HepG2 (cell line): ENCODE measurements at regions of chr10 and their contacts with region 1.

Region 1: DNA sequence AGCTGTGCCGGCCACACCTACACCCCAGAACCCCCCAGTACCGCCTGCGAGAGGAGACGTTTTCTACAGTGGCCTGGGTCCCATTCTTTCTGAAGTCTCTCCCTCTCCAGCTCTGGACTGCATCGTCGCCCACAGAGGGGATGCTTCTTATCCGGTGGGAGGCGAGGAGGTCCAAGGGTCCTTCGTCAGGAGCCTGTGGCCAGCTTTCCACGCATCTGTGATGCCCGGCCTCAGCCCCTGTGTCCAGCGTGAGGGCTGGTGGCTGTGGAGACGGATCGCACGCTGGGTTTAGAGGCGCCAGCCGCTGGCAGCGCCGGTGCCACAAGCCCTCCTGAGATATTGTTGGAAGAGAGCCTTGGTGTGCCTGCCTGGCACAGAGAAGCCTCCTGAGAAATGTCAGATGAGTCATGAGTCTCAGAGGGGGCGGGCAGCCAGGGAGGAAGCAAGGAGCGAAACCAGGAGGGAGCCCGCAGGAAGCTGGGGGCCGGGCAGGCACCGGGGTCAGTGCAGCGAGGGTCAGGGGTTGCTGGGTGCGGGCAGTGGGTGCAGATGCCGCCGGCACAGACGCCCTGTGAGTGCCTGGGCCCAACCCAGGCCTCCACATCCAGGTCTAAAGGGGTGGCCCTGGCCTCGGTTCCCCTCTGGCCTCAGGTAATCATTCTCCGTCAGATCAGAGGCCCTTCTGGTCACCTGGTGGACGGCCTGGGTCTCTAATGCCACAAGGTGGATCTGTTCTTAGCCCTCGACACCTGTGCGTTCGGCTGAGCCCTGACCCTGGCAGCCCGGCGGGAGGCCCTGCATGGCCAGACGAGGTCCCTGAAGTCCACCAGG is 86.0 kb upstream of the DIP2C start:
- DNase-seq: no peak
- ATAC-seq: peak; percentile 15; the same call in 2 of the 3 replicates
- H3K4me3 ChIP-seq: no peak overlapping the region
- H3K27ac ChIP-seq: no peak overlapping the region
- H3K4me1 ChIP-seq: no peaks in the 10 kb centered on the region
- H3K27me3 ChIP-seq: peaks cover 8 to 61% of the 10 kb centered on the region in 2 experiments; a peak in 4 of 5 replicates
- CTCF ChIP-seq: no peak
- EP300 ChIP-seq: no peak
- POLR2A ChIP-seq: no peak
- RAD21 ChIP-seq: no peak

Region 2: GRCh38 chr10:689433-690371 is 85.8 kb before region 1 on chr10 and contains the start of gene DIP2C:
- CTCF ChIA-PET with region 1: no interaction called
- POLR2A ChIA-PET with region 1: no interaction called
- in situ Hi-C with region 1: no loop called
- intact Hi-C with region 1: no loop called
- DNase-seq: peak; percentile 16
- ATAC-seq: peak; percentile 75
- H3K4me3 ChIP-seq: peak within 1 kb of the TSS; percentile 80 to 86 (median 86)
- H3K27ac ChIP-seq: peak within 1 kb of the TSS; percentile 58
- H3K4me1 ChIP-seq: peaks cover 29% of the 10 kb centered on the region
- H3K27me3 ChIP-seq: peaks cover 0 to 17% of the 10 kb centered on the region in 2 experiments; a peak in 3 of 5 replicates
- CTCF ChIP-seq: no peak
- EP300 ChIP-seq: no peak
- POLR2A ChIP-seq: no peak
- RAD21 ChIP-seq: no peak; the same call in 1 of the 2 replicates
- total RNA-seq, gene DIP2C: 2.2 and 2.7 TPM in 2 replicates

Region 3: GRCh38 chr10:712089-712488 is 63.4 kb before region 1 on chr10:
- CTCF ChIA-PET with region 1: no interaction called
- POLR2A ChIA-PET with region 1: no interaction called
- in situ Hi-C with region 1: loop called (anchors 5 kb)
- intact Hi-C with region 1: no loop called
- DNase-seq: peak; percentile 84
- ATAC-seq: peak; percentile 99
- H3K4me3 ChIP-seq: no peak overlapping the region
- H3K27ac ChIP-seq: peak overlapping the region; percentile 27
- H3K4me1 ChIP-seq: peaks cover 18% of the 10 kb centered on the region
- H3K27me3 ChIP-seq: no peaks in the 10 kb centered on the region; a peak in 1 of 5 replicates
- CTCF ChIP-seq: no peak
- EP300 ChIP-seq: peak in 1 of 2 experiments; percentile 52; a peak in 1 of 4 replicates
- POLR2A ChIP-seq: no peak
- RAD21 ChIP-seq: no peak